Left ventricle myocardium inferior (tissue), 1 donor: ENCODE measurements at regions of chr12 and their contacts with region 1.

Region 1: DNA sequence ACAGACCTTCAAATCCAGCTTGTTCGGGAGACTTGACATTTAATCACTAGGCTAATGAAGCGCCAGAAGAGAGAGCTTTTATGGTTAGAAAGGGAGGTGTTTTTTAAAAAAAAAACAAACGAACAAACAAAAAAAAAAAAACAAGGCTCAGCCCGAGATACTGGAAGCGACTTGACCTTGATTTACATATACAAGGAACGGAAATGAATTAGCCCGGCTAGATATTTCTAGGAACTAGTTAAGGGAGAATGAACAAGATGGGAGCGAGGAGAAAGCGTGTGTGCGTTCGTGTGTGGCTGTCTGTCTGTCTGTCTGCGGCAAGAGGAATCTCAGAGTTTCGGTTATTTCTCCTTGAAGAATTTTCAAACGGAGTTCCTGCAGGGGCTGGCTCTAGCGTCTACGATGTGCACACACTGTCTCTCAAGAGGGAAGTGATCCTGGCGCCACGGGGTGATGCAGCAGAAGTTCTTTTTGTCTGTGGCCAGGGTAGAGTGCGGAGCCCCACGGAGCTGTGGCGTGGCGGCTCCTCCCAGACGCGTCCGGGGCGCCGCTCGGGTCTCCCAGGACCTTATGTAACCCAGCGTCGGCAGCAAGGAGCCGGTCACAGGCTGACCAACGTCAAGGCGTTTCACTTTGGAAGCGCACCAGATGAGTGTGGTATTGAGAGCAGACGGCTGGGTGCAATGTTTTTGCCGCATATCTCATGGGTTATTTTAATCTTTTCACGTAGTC is 18.8 kb downstream of the SOCS2 start:
- DNase-seq: peak; percentile 78
- H3K4me3 ChIP-seq: peak overlapping the region; percentile 71
- H3K27ac ChIP-seq: peak overlapping the region; percentile 90
- H3K4me1 ChIP-seq: peaks cover 30% of the 10 kb centered on the region
- H3K27me3 ChIP-seq: no peaks in the 10 kb centered on the region
- CTCF ChIP-seq: no peak

Region 2: GRCh38 chr12:93742110-93742934 is 151.0 kb after region 1 on chr12:
- intact Hi-C with region 1: loop called (anchors 5 kb)
- DNase-seq: peak; percentile 75
- H3K4me3 ChIP-seq: peak overlapping the region; percentile 71
- H3K27ac ChIP-seq: peak overlapping the region; percentile 93
- H3K4me1 ChIP-seq: peaks cover 84% of the 10 kb centered on the region
- H3K27me3 ChIP-seq: no peaks in the 10 kb centered on the region
- CTCF ChIP-seq: peak; percentile 45